Right lobe of liver (tissue), 6 donors: ENCODE measurements at regions of chr5 and their contacts with region 1.

Region 1: GRCh38 chr5:10627160-10627701 is 63.4 kb downstream of the ANKRD33B start:
- DNase-seq: no peak
- ATAC-seq: peak; percentile 15 to 43 (median 18)
- H3K4me3 ChIP-seq: peak overlapping the region; percentile 1 to 30 (median 29)
- H3K27ac ChIP-seq: peak overlapping the region in 2 of 3 donors; percentile 76 to 87
- H3K4me1 ChIP-seq: peaks cover 0 to 2% (median 0%) of the 10 kb centered on the region in 4 donors
- H3K27me3 ChIP-seq: no peaks in the 10 kb centered on the region
- CTCF ChIP-seq: no peak
- POLR2A ChIP-seq: no peak

Region 2: GRCh38 chr5:10457682-10458574 is 169.3 kb before region 1 on chr5:
- intact Hi-C with region 1: loop called (anchors 2 to 5 kb)
- DNase-seq: peak in 2 of 3 donors; percentile 38 to 51
- ATAC-seq: peak; percentile 13 to 51 (median 28)
- H3K4me3 ChIP-seq: no peak overlapping the region
- H3K27ac ChIP-seq: no peak overlapping the region
- H3K4me1 ChIP-seq: peaks cover 0 to 35% (median 8%) of the 10 kb centered on the region in 4 donors
- H3K27me3 ChIP-seq: no peaks in the 10 kb centered on the region
- CTCF ChIP-seq: no peak
- POLR2A ChIP-seq: no peak

Region 3: DNA sequence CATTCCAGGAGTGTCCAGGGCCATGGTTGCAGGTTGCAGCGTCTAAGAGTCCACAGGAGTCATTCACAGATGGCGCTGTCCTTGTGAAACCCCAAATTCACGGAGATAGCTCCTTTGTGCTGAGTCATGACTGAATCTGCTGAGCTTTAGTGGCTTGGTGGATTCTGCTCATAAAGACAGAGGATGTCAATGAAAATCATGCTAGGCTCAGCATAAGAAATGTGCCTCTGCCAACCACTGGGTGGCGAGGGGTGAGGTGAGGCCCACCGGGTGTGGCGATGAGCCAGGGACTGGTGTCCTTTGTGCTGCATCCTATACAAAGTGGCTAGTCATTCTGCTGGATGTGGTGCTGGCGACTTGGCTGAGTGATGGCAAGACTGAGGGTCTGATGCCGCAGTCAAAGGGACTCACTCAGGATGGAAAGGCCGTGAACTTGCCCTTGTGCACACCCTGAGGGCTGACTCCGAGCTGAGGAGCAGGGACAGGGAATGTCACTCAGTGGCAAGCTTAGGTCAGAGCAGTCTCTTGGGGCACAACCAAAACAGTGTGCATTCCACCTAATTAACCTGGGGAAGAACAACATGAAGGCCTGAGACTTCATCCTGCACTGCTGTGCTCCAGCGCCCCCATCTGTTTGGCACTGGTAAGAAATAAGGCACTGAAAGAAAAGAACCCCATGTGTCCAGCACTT is 62.3 kb after region 1 on chr5:
- intact Hi-C with region 1: no loop called
- DNase-seq: no peak
- ATAC-seq: peak; percentile 19 to 67 (median 26)
- H3K4me3 ChIP-seq: no peak overlapping the region
- H3K27ac ChIP-seq: no peak overlapping the region
- H3K4me1 ChIP-seq: no peaks in the 10 kb centered on the region
- H3K27me3 ChIP-seq: no peaks in the 10 kb centered on the region
- CTCF ChIP-seq: peak in 1 of 4 donors; percentile 15
- POLR2A ChIP-seq: no peak

Region 4: GRCh38 chr5:11166923-11167322 is 539.7 kb after region 1 on chr5:
- intact Hi-C with region 1: no loop called
- DNase-seq: no peak
- ATAC-seq: no peak
- H3K4me3 ChIP-seq: no peak overlapping the region
- H3K27ac ChIP-seq: no peak overlapping the region
- H3K4me1 ChIP-seq: no peaks in the 10 kb centered on the region
- H3K27me3 ChIP-seq: no peaks in the 10 kb centered on the region
- CTCF ChIP-seq: no peak
- POLR2A ChIP-seq: no peak